ENCODE measurements at regions of chr1 and their contacts with region 1.

Region 1: GRCh38 chr1:205141236-205142101 is 19.7 kb upstream of the RBBP5 start:
- DNase-seq: peak; percentile 86
- ATAC-seq: peak; percentile 92
- H3K4me3 Mint-ChIP-seq: no peak overlapping the region
- H3K27ac Mint-ChIP-seq: no peak overlapping the region
- H3K4me1 Mint-ChIP-seq: peaks cover 7% of the 10 kb centered on the region
- H3K27me3 Mint-ChIP-seq: no peaks in the 10 kb centered on the region

Region 2: DNA sequence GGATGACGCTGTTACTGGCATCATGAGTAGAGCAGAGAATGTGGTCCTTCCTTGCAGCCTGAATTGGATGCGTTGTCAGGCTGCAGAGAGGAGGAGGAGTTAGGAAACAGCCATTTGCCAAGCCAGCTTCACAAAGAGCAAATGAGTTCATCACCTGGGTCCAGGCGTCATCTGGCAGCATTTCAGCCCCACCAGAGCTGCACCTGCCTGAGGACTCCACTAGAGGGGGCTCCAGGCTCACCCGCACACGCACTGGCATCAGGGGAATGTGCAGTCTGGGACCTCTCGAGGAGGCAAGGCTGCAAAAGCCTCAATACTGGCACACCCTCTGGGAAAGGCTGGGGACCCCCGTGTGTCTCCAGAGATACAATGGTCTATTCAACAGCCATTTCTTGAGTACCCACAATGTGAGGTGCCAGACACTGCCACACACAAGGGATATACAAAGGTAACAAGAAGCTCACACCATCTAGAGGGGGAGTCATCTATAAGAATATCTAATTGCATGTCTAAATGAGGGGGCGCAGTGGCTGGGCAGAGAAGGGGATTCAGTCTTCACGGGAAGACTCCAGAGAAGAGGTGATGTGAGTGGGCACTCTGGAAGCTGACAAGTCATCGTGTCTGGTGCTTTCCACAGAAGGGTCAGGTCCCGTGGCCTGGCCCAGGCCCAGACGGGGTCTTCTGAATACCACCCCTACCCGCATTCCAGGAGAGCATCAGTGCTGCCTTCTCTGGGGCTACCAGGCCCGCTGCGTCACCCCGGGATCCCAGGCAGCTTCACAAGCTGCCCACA is 152.0 kb before region 1 on chr1:
- CTCF ChIA-PET with region 1: interaction called, 13 read pairs
- POLR2A ChIA-PET with region 1: no interaction called
- DNase-seq: peak; percentile 73
- ATAC-seq: peak; percentile 66
- H3K4me3 Mint-ChIP-seq: no peak overlapping the region
- H3K27ac Mint-ChIP-seq: no peak overlapping the region
- H3K4me1 Mint-ChIP-seq: peaks cover 14% of the 10 kb centered on the region
- H3K27me3 Mint-ChIP-seq: peaks cover 9% of the 10 kb centered on the region

Region 3: DNA sequence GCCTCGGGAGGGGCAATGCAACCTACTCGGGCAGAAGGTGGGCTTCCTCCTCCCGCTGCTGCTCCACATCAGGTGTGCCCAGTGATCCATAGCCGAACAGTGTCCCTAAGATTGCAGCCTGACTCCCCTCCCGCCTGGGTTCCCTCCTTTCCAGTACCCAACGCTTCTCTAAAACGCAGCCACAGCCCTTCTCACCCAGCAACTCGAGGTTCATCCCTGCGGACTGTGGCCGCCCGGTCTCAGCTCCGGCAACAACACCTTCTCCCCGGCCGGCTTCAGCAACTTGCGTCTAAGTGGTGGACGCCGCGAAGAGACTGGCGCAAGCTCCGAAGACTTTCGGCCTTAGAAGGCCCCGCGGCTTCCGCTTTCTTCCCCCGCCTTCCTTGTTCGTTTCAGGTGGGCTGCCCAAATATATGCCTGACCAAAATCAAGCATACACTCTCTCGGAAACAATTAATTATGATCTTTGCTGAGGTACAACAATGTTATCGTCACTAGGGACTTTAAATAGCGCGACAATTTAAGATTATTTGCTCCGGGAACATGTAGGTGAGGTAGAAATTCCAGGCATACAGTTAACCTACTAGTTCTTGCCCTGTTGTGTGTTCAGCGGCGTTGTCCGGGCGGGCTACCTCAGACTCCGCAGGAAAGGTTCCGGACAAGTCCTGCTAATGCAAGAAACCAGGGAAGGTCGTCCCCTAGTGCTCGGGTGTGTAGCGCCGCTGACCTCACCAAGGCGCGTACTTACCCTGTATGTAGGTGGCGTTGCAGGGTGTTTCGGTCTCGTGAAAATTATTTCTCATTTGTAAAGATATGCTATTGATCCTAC is 19.6 kb before region 1 on chr1 and contains the start of gene RBBP5:
- CTCF ChIA-PET with region 1: interaction called, 46 read pairs
- POLR2A ChIA-PET with region 1: interaction called, 3 read pairs
- DNase-seq: peak; percentile 96
- ATAC-seq: peak; percentile 98
- H3K4me3 Mint-ChIP-seq: peak within 1 kb of the TSS; percentile 96
- H3K27ac Mint-ChIP-seq: peak within 1 kb of the TSS; percentile 99
- H3K4me1 Mint-ChIP-seq: peaks cover 39% of the 10 kb centered on the region
- H3K27me3 Mint-ChIP-seq: no peaks in the 10 kb centered on the region
- total RNA-seq, gene RBBP5: 20.3 to 22.0 TPM

Region 4: DNA sequence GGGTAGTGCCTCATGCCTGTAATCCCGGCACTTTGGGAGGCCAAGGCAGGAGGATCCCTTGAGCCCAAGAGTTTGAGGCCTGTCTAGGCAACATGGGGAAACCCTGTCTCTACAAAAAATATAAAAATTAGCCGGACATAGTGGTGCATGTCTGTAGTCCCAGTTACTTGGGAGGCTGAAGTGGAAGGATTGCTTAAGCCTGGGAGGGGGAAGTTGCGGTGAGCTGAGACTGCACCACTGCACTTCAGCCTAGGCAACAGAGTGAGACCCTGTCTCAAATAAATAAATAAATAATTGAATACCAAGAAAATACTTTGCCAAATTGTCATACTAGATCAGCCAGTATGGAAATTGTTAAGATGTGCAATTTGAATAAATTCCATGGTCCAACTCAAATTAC is 13.8 kb before region 1 on chr1:
- CTCF ChIA-PET with region 1: interaction called, 46 read pairs
- POLR2A ChIA-PET with region 1: interaction called, 3 read pairs
- DNase-seq: no peak
- ATAC-seq: no peak
- H3K4me3 Mint-ChIP-seq: no peak overlapping the region
- H3K27ac Mint-ChIP-seq: no peak overlapping the region
- H3K4me1 Mint-ChIP-seq: peaks cover 9% of the 10 kb centered on the region
- H3K27me3 Mint-ChIP-seq: no peaks in the 10 kb centered on the region

Region 5: DNA sequence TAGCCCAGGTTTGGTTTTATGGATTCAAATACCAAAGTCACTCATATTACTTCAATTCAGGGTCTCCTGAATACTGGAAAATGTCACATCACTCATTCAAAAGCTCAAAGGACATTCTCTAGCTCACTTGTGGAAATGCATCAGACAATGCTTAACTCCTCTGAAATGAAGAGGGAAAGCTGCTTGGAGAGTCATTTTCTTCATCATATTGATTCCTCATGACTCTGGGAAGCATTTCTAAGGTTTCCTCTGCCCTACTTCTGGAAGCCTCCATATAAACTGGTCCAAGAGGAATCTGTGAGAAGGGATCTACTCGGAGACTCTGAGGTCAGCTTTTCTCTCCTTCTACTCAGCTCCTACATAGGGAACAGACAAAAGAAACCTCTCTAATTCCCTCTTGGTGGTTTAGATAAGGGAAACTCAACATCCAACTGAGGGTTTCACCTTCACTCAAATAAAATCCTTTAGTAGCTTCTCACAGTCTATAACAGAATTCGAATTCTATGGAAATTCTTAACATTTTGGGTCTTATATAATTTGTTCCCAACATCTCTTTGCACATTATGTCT is 16.7 kb after region 1 on chr1:
- CTCF ChIA-PET with region 1: interaction called, 11 read pairs
- POLR2A ChIA-PET with region 1: no interaction called
- DNase-seq: no peak
- ATAC-seq: no peak
- H3K4me3 Mint-ChIP-seq: no peak overlapping the region
- H3K27ac Mint-ChIP-seq: no peak overlapping the region
- H3K4me1 Mint-ChIP-seq: peaks cover 8% of the 10 kb centered on the region
- H3K27me3 Mint-ChIP-seq: no peaks in the 10 kb centered on the region

Region 6: GRCh38 chr1:205183676-205184335 is 42.3 kb after region 1 on chr1:
- CTCF ChIA-PET with region 1: interaction called, 13 read pairs
- POLR2A ChIA-PET with region 1: no interaction called
- DNase-seq: peak; percentile 33
- ATAC-seq: peak; percentile 59
- H3K4me3 Mint-ChIP-seq: peak overlapping the region; percentile 32
- H3K27ac Mint-ChIP-seq: peak overlapping the region; percentile 77
- H3K4me1 Mint-ChIP-seq: peaks cover 62% of the 10 kb centered on the region
- H3K27me3 Mint-ChIP-seq: no peaks in the 10 kb centered on the region

Region 7: GRCh38 chr1:205199090-205199930 is 57.8 kb after region 1 on chr1:
- CTCF ChIA-PET with region 1: interaction called, 15 read pairs
- POLR2A ChIA-PET with region 1: no interaction called
- DNase-seq: peak; percentile 43
- ATAC-seq: peak; percentile 83
- H3K4me3 Mint-ChIP-seq: peak overlapping the region; percentile 62
- H3K27ac Mint-ChIP-seq: peak overlapping the region; percentile 71
- H3K4me1 Mint-ChIP-seq: peaks cover 49% of the 10 kb centered on the region
- H3K27me3 Mint-ChIP-seq: no peaks in the 10 kb centered on the region

Measured in activated CD8-positive, alpha-beta T cell treated with anti-CD3 and anti-CD28 coated beads, Interleukin-2, amount 10 ng/mL, durations not matched to agents 7 days and 5 days (primary cell).